ENCODE measurements at regions of chr13 and their contacts with region 1.

Region 1: GRCh38 chr13:33723772-33724435 is 94.0 kb upstream of the RFC3 start:
- DNase-seq: peak; percentile 81
- ATAC-seq: peak; percentile 90
- H3K4me3 Mint-ChIP-seq: no peak overlapping the region
- H3K27ac Mint-ChIP-seq: peak overlapping the region; percentile 87
- H3K4me1 Mint-ChIP-seq: peaks cover 30% of the 10 kb centered on the region
- H3K27me3 Mint-ChIP-seq: no peaks in the 10 kb centered on the region

Region 2: GRCh38 chr13:32650705-32651311 is 1073.1 kb before region 1 on chr13:
- CTCF ChIA-PET with region 1: no interaction called
- POLR2A ChIA-PET with region 1: no interaction called
- intact Hi-C with region 1: loop called in 1 of 2 experiments (anchors 10 kb)
- DNase-seq: peak; percentile 80
- ATAC-seq: peak; percentile 90
- H3K4me3 Mint-ChIP-seq: no peak overlapping the region
- H3K27ac Mint-ChIP-seq: peak overlapping the region; percentile 72
- H3K4me1 Mint-ChIP-seq: peaks cover 47% of the 10 kb centered on the region
- H3K27me3 Mint-ChIP-seq: no peaks in the 10 kb centered on the region

Region 3: GRCh38 chr13:33367926-33368325 is 356.0 kb before region 1 on chr13:
- CTCF ChIA-PET with region 1: no interaction called
- POLR2A ChIA-PET with region 1: no interaction called
- intact Hi-C with region 1: loop called in 1 of 2 experiments (anchors 10 kb)
- DNase-seq: no peak
- ATAC-seq: no peak
- H3K4me3 Mint-ChIP-seq: no peak overlapping the region
- H3K27ac Mint-ChIP-seq: no peak overlapping the region
- H3K4me1 Mint-ChIP-seq: peaks cover 6% of the 10 kb centered on the region
- H3K27me3 Mint-ChIP-seq: peaks cover 7% of the 10 kb centered on the region

Region 4: DNA sequence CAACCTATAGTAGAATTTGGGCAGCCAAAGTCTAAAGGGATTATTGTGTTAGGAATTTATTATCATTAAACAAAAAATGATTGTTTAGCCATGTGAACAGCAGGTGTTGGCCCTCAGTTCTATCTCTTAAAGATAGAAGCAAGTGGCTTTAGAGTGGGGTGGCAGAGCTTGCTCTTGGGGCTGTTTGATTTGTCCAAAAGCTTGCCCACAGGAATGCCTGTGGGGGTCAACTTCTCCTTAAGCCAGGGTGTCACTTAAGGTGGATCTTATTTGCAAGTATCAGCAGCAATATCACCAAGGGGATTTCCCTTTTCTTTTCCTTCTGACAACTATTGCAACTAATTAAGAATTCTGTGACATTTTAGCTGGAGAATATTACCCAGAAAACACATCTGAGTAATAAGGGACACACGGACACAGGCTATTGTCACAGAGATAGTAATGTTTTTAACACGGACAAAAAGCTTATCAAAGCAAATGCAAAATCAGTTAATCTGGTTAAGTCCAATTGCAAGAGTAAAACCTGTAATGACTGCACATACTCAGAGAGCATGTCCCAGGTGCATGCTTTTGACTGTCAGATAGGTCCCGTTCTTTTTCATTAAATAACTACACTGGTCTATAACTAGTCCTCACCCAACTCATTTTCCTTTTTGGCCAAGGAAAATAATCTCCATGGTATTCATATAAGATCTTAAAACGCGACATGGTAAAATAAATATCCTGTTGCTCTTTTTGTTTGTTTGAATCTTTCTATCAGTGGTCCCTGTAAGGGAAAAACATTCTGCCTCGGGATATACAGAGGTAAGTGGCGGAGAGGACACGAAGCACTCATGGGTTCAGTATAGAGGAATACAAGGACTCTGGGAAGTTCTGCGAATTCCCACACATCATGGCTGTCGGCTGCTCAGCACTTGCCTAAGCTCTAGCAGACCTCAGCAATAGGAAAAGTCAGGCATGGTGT is 78.0 kb before region 1 on chr13:
- CTCF ChIA-PET with region 1: interaction called, 5 read pairs
- POLR2A ChIA-PET with region 1: no interaction called
- intact Hi-C with region 1: loop called in 1 of 2 experiments (anchors 2 kb)
- DNase-seq: no peak
- ATAC-seq: peak; percentile 57
- H3K4me3 Mint-ChIP-seq: no peak overlapping the region
- H3K27ac Mint-ChIP-seq: peak overlapping the region; percentile 42
- H3K4me1 Mint-ChIP-seq: peaks cover 31% of the 10 kb centered on the region
- H3K27me3 Mint-ChIP-seq: no peaks in the 10 kb centered on the region

Region 5: DNA sequence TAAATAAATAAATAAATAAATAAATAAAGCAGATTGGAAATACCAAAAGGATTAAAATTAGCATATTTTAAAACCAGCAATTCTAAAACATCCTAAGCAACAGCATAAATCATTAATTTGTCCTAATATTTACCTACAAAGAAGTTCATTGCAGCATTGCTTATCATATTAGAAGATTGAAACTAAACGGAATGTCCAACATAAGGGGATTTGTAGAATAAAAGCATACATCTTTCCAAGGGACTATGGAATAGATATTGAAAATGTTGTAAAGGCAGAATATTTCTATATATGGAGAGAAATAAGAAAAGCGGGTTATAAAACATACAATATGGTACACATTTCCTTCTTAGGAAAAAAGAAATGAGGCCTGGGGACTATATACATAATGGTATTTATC is 23.0 kb after region 1 on chr13:
- CTCF ChIA-PET with region 1: no interaction called
- POLR2A ChIA-PET with region 1: no interaction called
- intact Hi-C with region 1: no loop called
- DNase-seq: no peak
- ATAC-seq: no peak
- H3K4me3 Mint-ChIP-seq: no peak overlapping the region
- H3K27ac Mint-ChIP-seq: no peak overlapping the region
- H3K4me1 Mint-ChIP-seq: peaks cover 13% of the 10 kb centered on the region
- H3K27me3 Mint-ChIP-seq: no peaks in the 10 kb centered on the region

Region 6: DNA sequence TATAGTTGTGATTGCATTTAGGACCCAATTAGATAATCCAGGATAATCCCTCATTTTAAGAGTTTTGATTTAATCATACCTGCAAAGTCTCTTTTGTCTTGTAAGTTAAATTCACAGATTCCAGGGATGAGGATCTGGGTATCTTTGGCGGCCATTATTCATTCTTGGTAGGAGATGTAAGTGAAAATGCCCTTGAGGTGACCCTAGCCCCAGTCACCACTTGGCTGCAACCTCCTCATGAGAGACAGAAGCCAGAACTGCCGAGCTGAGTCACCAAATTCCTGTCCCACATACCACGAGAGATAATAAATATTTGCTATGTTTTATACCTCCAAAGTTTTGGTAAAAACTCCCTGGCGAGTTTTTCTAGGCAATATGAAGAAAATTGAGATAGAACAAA is 483.4 kb after region 1 on chr13:
- CTCF ChIA-PET with region 1: no interaction called
- POLR2A ChIA-PET with region 1: no interaction called
- intact Hi-C with region 1: no loop called
- DNase-seq: no peak
- ATAC-seq: no peak
- H3K4me3 Mint-ChIP-seq: no peak overlapping the region
- H3K27ac Mint-ChIP-seq: no peak overlapping the region
- H3K4me1 Mint-ChIP-seq: no peaks in the 10 kb centered on the region
- H3K27me3 Mint-ChIP-seq: no peaks in the 10 kb centered on the region

Region 7: DNA sequence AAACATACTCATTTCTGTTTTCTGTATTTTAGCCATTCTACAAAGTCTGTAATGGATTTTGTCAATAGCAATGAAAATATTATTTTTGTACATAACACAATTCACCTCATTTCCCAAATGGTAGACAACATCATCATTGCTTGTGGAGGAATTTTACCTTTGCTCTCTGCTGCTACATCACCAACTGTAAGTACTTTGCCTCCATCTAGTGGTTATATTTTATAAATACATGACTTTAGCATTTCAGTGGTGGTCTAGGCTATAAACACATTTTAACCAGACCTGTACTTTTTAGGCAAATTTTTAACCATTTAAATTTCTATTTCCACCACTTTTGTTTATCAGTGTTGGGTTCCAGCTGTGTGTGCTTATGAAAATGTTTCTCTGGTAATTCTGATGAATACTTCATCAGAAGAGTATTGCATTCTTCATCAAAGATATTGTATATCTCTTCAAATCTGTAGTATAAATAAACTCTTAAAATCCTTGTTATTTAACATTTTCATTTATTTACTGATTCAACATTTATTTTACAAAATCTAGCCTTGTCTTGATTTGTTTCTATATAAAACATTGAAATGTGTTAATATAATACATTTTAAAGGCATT is 1440.5 kb after region 1 on chr13:
- CTCF ChIA-PET with region 1: no interaction called
- POLR2A ChIA-PET with region 1: no interaction called
- intact Hi-C with region 1: loop called in 1 of 2 experiments (anchors 10 kb)
- DNase-seq: no peak
- ATAC-seq: peak; percentile 55
- H3K4me3 Mint-ChIP-seq: no peak overlapping the region
- H3K27ac Mint-ChIP-seq: no peak overlapping the region
- H3K4me1 Mint-ChIP-seq: peaks cover 7% of the 10 kb centered on the region
- H3K27me3 Mint-ChIP-seq: no peaks in the 10 kb centered on the region